Right ventricle myocardium inferior (tissue), 1 donor: ENCODE measurements at regions of chr10 and their contacts with region 1.

Region 1: DNA sequence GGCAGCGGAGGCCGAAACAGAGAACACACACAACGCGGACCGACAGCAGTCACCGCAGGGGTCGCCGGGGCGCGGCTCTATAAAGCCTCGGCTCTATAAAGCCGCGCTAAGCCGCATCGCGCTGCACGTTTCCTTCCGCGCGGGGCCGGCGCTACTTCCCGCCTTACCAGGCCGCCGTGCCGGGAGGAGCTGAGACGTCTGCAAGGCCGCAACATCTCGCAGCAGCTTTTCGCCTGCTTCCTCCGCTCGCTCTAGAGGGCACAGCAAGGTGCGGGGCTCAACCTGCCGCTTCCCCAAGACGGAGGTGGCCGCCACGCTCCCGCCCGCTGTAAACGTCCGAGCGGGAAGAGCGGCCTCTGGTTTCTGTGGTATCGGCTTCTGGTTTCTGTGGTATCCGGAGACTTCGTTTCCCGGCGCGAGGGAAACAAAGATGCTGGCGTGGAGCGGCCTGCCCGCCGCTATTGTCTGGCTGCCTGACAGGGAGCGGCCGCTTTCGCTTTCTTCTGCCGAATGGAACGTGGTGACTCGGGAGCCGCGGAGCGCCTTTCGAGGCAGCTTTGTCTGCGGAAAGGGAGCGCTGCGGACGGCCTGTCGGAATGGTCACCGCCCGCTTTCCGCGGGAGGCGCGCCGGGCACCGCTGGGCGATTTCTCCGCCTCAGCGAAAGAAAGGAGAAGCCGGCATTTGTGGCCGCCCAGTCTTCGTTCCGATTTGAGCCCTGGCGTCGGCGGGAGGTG is 91.8 kb downstream of the SPAG6 start:
- DNase-seq: peak; percentile 97
- ATAC-seq: peak; percentile 97

Region 2: DNA sequence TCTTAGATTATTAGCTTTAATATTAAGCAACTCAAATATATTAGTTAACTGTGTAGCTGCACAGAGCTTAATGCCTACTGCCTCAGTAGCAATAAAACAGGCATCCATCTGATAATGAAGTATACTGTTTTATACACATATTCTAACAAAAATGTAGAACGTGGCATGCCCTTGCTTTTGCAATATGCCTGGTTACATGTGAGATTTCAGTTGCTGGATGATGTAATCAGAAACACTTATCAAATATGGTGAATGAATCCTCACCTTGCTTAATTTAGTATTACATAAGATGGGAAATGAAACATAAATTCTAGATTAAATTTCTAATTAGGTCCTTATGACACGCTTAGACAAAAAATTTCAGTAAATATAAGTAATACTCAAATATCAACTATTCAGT is 441.5 kb before region 1 on chr10:
- intact Hi-C with region 1: loop called (anchors 5 kb)
- DNase-seq: no peak
- ATAC-seq: no peak

Region 3: DNA sequence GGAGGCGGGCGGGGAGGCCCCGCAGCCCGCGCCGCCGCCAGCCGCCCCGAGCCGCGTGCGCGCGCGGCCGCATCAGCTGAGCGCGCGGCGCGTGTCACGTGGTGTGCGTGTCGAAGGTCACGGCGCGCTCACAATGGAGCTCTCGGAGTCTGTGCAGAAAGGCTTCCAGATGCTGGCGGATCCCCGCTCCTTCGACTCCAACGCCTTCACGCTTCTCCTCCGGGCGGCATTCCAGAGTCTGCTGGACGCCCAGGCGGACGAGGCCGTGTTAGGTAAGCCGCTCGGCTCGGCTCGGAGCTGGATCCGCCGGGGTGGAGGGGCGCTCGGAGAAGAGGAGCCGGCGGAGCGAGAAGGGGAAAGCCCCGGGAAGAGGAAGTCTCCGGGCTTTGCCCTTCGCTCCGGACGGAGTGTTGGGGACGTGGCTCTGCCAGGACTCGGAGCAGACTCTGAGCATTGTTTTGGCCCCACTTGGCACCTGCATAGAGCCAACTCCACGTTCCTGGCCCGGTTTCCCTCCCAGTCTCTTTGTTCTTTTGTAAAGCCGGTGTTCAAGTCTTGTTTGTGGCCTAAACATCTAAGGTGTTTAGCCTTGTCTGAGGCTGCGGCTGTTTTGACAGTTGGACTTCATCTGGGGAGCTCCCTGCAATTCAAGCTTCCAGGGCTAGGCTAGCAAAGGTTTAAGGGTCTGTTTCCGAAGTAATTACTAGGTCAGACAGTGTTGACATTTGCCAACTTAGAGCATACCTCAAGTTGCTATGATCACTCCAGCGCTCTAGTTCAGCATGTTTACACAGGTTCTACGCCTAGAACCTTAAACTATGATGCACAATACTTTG is 120.5 kb before region 1 on chr10 and contains the start of gene COMMD3:
- intact Hi-C with region 1: loop called (anchors 5 kb)
- DNase-seq: peak; percentile 96
- ATAC-seq: peak; percentile 92
- total RNA-seq, gene COMMD3: 89.9 TPM

Region 4: DNA sequence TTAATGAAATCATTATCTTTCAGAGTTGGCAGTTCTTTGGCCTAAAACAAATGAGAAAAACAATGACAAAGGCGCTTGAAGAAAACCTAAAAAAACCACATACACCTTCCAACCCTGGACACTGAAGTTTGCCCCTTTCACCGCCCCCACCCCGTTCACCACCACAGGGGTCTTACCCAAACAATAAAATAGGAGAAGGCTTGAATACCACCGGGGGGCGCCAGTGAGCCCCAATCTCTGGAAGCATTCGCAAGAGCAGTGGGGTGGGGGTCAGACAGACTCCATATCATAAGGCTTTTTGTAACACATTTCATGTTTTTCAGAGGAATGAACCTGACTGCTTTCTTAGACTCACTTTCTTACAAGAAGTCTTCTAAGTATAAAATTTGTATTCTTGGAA is 113.7 kb after region 1 on chr10:
- intact Hi-C with region 1: loop called (anchors 5 kb)
- DNase-seq: no peak
- ATAC-seq: no peak

Region 5: DNA sequence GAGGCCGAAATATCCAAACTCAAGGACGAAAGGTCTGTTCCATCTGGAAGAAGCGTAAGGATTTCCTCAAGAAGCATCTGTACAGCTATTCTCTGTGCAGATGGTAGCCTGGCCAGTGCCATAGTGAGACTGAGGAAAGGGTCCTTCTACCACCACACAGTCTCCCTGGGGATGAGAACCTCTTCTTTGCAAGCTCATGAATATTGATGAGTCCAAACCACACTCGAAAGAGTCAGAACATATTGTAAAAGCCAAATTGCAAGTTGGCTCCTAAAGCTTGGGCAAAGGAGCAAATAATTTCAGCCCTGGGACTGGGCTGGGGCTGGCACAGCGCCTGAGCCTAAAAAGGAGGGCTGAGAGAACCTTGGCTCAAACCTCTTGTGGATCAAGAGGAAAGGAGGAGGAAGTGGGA is 343.4 kb after region 1 on chr10:
- intact Hi-C with region 1: no loop called
- DNase-seq: no peak
- ATAC-seq: peak; percentile 41

Region 6: GRCh38 chr10:22988581-22989360 is 551.7 kb after region 1 on chr10:
- intact Hi-C with region 1: loop called (anchors 2 kb)
- DNase-seq: no peak
- ATAC-seq: peak; percentile 76